Heart right ventricle (tissue), 16 donors: ENCODE measurements at regions of chr18 and their contacts with region 1.

Region 1: GRCh38 chr18:60543646-60544045 is 171.1 kb upstream of the MC4R start:
- DNase-seq: no peak
- ATAC-seq: no peak
- H3K4me3 ChIP-seq: no peak overlapping the region
- H3K27ac ChIP-seq: no peak overlapping the region
- H3K4me1 ChIP-seq: no peaks in the 10 kb centered on the region
- H3K27me3 ChIP-seq: peaks cover 0 to 11% (median 0%) of the 10 kb centered on the region in 7 donors
- CTCF ChIP-seq: no peak

Region 2: GRCh38 chr18:59980188-59980637 is 563.4 kb before region 1 on chr18:
- intact Hi-C with region 1: loop called in 4 of 10 experiments (anchors 2 to 5 kb)
- DNase-seq: no peak
- ATAC-seq: no peak
- H3K4me3 ChIP-seq: no peak overlapping the region
- H3K27ac ChIP-seq: no peak overlapping the region
- H3K4me1 ChIP-seq: no peaks in the 10 kb centered on the region
- H3K27me3 ChIP-seq: peaks cover 0 to 6% (median 0%) of the 10 kb centered on the region in 7 donors
- CTCF ChIP-seq: no peak

Region 3: DNA sequence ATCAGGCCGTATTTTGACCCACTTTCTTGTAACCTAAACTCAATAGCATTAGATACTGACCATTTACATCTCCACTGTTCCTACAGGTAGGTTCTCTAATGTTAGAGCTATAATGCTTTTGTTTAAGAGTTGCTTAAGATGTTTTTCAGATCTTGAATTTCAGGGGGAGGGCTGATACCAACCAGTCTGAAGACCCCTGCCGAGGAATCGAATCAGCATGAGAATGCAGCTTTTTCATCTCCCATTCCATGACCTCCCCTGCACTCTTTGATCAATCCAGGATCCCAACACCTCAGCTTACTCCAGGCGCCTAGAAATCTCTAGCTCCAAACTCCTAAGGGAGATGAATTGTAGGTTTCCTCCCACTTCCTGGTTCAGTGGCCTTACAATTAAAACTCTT is 50.6 kb before region 1 on chr18:
- intact Hi-C with region 1: no loop called
- DNase-seq: no peak
- ATAC-seq: no peak
- H3K4me3 ChIP-seq: no peak overlapping the region
- H3K27ac ChIP-seq: no peak overlapping the region
- H3K4me1 ChIP-seq: no peaks in the 10 kb centered on the region
- H3K27me3 ChIP-seq: no peaks in the 10 kb centered on the region
- CTCF ChIP-seq: no peak